ENCODE measurements at regions of chr3 and their contacts with region 1.

Region 1: DNA sequence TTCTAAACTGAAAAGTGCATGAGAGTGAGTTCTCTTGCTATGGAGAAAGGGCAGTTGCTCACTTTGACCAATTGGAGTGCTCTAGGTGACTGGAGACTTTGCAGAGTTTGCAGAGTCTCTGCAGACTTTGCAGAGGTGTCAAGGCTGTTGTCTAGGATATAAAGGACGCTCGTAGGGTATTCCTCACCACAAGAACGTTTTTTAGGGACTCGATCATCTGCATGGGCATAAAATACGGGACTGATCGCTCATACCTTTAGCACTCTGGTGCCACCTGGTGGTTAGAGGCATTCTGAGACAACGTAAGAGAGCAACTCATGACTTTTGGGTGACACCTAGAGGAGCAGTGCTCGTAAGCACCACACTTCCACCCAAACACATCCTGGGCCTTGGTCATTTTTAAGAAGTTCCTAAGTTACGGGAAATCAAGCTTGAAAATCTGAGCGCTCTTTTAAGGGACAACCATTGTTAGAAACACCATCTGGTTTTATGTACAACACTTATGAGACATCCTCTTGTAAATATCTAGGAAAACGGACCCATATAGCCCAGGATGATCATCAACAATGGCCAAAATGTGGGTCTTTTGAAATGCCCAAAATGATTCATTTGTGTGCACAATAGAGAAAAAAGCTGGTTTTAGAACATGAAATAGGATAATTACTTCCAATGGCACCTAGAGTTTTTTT is 51.6 kb upstream of the XCR1 start:
- DNase-seq: peak; percentile 82
- ATAC-seq: peak; percentile 99
- H3K4me3 ChIP-seq: no peak overlapping the region
- H3K27ac ChIP-seq: no peak overlapping the region
- H3K4me1 ChIP-seq: no peaks in the 10 kb centered on the region
- H3K27me3 ChIP-seq: 0 out of 4 replicates have a peak, but pooled peaks cover 0 to 2% of the 10 kb centered on the region in 2 experiments
- CTCF ChIP-seq: peak; percentile 93 to 100 (median 100); a peak in 5 of 6 replicates
- EP300 ChIP-seq: no peak
- POLR2A ChIP-seq: no peak
- RAD21 ChIP-seq: peak; percentile 100

Region 2: DNA sequence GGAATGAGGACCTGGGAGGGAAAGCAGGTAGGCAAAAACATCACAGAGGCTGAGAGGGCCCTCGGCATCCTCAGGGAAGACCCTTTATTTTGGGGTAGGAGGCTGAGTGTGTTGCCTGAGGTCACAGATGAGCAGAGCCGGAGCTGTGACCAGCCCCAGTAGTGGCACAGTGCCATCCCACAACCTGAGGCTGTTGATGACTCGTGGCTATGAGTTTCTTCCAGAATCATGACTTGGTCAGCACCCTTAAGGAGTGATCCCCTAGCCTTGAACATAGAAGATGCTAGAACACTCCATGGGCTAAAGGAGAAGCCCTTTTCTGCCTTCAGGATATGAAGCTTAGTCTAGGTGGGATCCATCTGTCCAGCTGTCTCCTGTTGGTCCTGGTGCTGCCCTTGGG is 155.1 kb before region 1 on chr3:
- CTCF ChIA-PET with region 1: interaction called, 126 read pairs
- POLR2A ChIA-PET with region 1: no interaction called
- RAD21 ChIA-PET with region 1: interaction called, 33 read pairs
- SMC1A ChIA-PET with region 1: interaction called, 523 read pairs
- in situ Hi-C with region 1: no loop called
- intact Hi-C with region 1: no loop called
- DNase-seq: no peak
- ATAC-seq: no peak
- H3K4me3 ChIP-seq: no peak overlapping the region
- H3K27ac ChIP-seq: no peak overlapping the region
- H3K4me1 ChIP-seq: no peaks in the 10 kb centered on the region; the same call in 1 of the 2 replicates
- H3K27me3 ChIP-seq: no peaks in the 10 kb centered on the region
- CTCF ChIP-seq: no peak
- EP300 ChIP-seq: no peak
- POLR2A ChIP-seq: no peak
- RAD21 ChIP-seq: no peak

Region 3: GRCh38 chr3:45958321-45958791 is 120.5 kb before region 1 on chr3:
- CTCF ChIA-PET with region 1: interaction called, 90 read pairs
- POLR2A ChIA-PET with region 1: interaction called, 5 read pairs
- RAD21 ChIA-PET with region 1: interaction called, 10 read pairs
- SMC1A ChIA-PET with region 1: interaction called, 39 read pairs
- in situ Hi-C with region 1: no loop called
- intact Hi-C with region 1: no loop called
- DNase-seq: no peak
- ATAC-seq: no peak
- H3K4me3 ChIP-seq: no peak overlapping the region
- H3K27ac ChIP-seq: no peak overlapping the region
- H3K4me1 ChIP-seq: peaks cover 19% of the 10 kb centered on the region
- H3K27me3 ChIP-seq: no peaks in the 10 kb centered on the region
- CTCF ChIP-seq: no peak
- EP300 ChIP-seq: no peak
- POLR2A ChIP-seq: no peak
- RAD21 ChIP-seq: no peak

Region 4: GRCh38 chr3:45995236-45996192 is 83.3 kb before region 1 on chr3 and contains the start of gene FYCO1:
- CTCF ChIA-PET with region 1: interaction called, 23 read pairs
- POLR2A ChIA-PET with region 1: no interaction called
- RAD21 ChIA-PET with region 1: interaction called, 13 read pairs
- SMC1A ChIA-PET with region 1: interaction called, 23 read pairs
- in situ Hi-C with region 1: no loop called
- intact Hi-C with region 1: no loop called
- DNase-seq: peak; percentile 59
- ATAC-seq: peak; percentile 94
- H3K4me3 ChIP-seq: peak within 1 kb of the TSS; percentile 79
- H3K27ac ChIP-seq: peak within 1 kb of the TSS; percentile 90
- H3K4me1 ChIP-seq: peaks cover 30% of the 10 kb centered on the region
- H3K27me3 ChIP-seq: no peaks in the 10 kb centered on the region
- CTCF ChIP-seq: no peak
- EP300 ChIP-seq: peak in 1 of 2 experiments; percentile 34; a peak in 1 of 4 replicates
- POLR2A ChIP-seq: peak; percentile 88
- RAD21 ChIP-seq: no peak
- polyA plus RNA-seq, gene FYCO1: 1.5 to 2.2 TPM

Region 5: DNA sequence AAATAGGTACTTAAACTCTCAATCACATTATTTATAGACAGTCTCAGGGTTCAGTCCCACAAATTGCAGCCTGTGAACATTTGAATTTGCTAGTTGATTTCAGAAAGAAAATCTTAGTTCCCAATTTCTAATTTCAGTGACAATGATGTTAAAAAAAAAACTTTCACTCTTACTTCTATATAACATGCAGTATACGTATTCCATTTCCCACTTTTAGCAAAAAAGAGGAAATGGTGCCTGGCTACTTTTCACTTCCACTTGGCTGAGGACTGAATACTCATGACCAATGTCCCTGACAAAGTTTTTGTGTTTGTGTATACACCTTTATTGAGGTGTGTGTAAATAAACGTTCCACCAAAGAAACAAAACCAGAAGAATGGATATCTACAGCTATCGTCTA is 19.4 kb before region 1 on chr3:
- CTCF ChIA-PET with region 1: interaction called, 110 read pairs
- POLR2A ChIA-PET with region 1: interaction called, 6 read pairs
- RAD21 ChIA-PET with region 1: interaction called, 67 read pairs
- SMC1A ChIA-PET with region 1: interaction called, 59 read pairs
- in situ Hi-C with region 1: no loop called
- intact Hi-C with region 1: no loop called
- DNase-seq: peak; percentile 38
- ATAC-seq: peak; percentile 91
- H3K4me3 ChIP-seq: 0 out of 2 replicates have a peak overlapping the region, but pooled peaks have one; percentile 25
- H3K27ac ChIP-seq: peak overlapping the region; percentile 51
- H3K4me1 ChIP-seq: peaks cover 29% of the 10 kb centered on the region
- H3K27me3 ChIP-seq: no peaks in the 10 kb centered on the region
- CTCF ChIP-seq: no peak
- EP300 ChIP-seq: peak; percentile 71 to 85; a peak in 3 of 4 replicates
- POLR2A ChIP-seq: no peak
- RAD21 ChIP-seq: no peak

Region 6: GRCh38 chr3:46208167-46208704 is 129.4 kb after region 1 on chr3 and contains the start of gene CCR1:
- CTCF ChIA-PET with region 1: interaction called, 396 read pairs
- POLR2A ChIA-PET with region 1: interaction called, 13 read pairs
- RAD21 ChIA-PET with region 1: interaction called, 73 read pairs
- SMC1A ChIA-PET with region 1: interaction called, 342 read pairs
- in situ Hi-C with region 1: no loop called
- intact Hi-C with region 1: no loop called
- DNase-seq: peak; percentile 92
- ATAC-seq: peak; percentile 86
- H3K4me3 ChIP-seq: peak within 1 kb of the TSS; percentile 28; the same call in 1 of the 2 replicates
- H3K27ac ChIP-seq: peak within 1 kb of the TSS; percentile 51
- H3K4me1 ChIP-seq: peaks cover 33% of the 10 kb centered on the region
- H3K27me3 ChIP-seq: no peaks in the 10 kb centered on the region
- CTCF ChIP-seq: peak; percentile 66 to 86 (median 75)
- EP300 ChIP-seq: peak; percentile 65 to 82; a peak in 3 of 4 replicates
- POLR2A ChIP-seq: no peak
- RAD21 ChIP-seq: peak; percentile 87
- polyA plus RNA-seq, gene CCR1: 3.4 to 3.7 TPM

Region 7: GRCh38 chr3:46252980-46253379 is 174.1 kb after region 1 on chr3:
- CTCF ChIA-PET with region 1: no interaction called
- POLR2A ChIA-PET with region 1: no interaction called
- RAD21 ChIA-PET with region 1: no interaction called
- SMC1A ChIA-PET with region 1: no interaction called
- in situ Hi-C with region 1: no loop called
- intact Hi-C with region 1: no loop called
- DNase-seq: no peak
- ATAC-seq: peak; percentile 49
- H3K4me3 ChIP-seq: no peak overlapping the region
- H3K27ac ChIP-seq: no peak overlapping the region
- H3K4me1 ChIP-seq: no peaks in the 10 kb centered on the region
- H3K27me3 ChIP-seq: no peaks in the 10 kb centered on the region
- CTCF ChIP-seq: no peak
- EP300 ChIP-seq: no peak
- POLR2A ChIP-seq: no peak
- RAD21 ChIP-seq: no peak

Measured in GM12878 (cell line).